ENCODE measurements at regions of chr1 and their contacts with region 1.

Region 1: GRCh38 chr1:177181631-177182291 is 11.0 kb downstream of the BRINP2 start:
- DNase-seq: no peak
- H3K4me3 ChIP-seq: peak overlapping the region; percentile 46
- H3K27ac ChIP-seq: no peak overlapping the region
- H3K27me3 ChIP-seq: peaks cover 22% of the 10 kb centered on the region
- CTCF ChIP-seq: peak; percentile 86

Region 2: DNA sequence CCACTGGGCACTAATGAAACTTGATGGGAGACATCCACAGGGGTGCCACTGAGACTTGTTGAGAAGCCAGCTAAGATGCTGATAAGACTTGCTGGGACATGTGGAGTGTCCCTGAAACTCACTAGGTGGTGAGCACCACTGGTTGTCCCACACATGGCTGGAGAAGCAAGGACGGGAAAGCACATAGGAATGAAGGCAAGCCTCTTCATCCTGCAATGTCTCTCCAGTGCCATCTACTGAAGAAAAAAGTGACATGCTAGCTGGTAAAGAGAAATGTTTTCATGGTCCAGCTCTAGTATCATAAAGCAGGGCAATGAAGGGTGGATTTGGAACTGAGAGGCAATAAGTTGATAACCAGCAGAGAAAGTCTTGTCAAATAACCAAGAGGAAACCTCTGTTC is 435.8 kb before region 1 on chr1:
- CTCF ChIA-PET with region 1: no interaction called
- POLR2A ChIA-PET with region 1: no interaction called
- DNase-seq: no peak
- H3K4me3 ChIP-seq: no peak overlapping the region
- H3K27ac ChIP-seq: no peak overlapping the region
- H3K27me3 ChIP-seq: no peaks in the 10 kb centered on the region
- CTCF ChIP-seq: no peak

Region 3: GRCh38 chr1:176897350-176898236 is 284.2 kb before region 1 on chr1:
- CTCF ChIA-PET with region 1: interaction called, 27 read pairs
- POLR2A ChIA-PET with region 1: no interaction called
- DNase-seq: peak; percentile 18
- H3K4me3 ChIP-seq: no peak overlapping the region
- H3K27ac ChIP-seq: no peak overlapping the region
- H3K27me3 ChIP-seq: no peaks in the 10 kb centered on the region
- CTCF ChIP-seq: peak; percentile 81

Region 4: GRCh38 chr1:177164380-177165068 is 17.2 kb before region 1 on chr1 and contains the start of gene ASTN1:
- CTCF ChIA-PET with region 1: interaction called, 17 read pairs
- POLR2A ChIA-PET with region 1: no interaction called
- DNase-seq: no peak
- H3K4me3 ChIP-seq: peak within 1 kb of the TSS; percentile 50
- H3K27ac ChIP-seq: no peak within 1 kb of the TSS
- H3K27me3 ChIP-seq: peaks cover 27% of the 10 kb centered on the region
- CTCF ChIP-seq: no peak
- polyA plus RNA-seq, gene ASTN1: 0.09 and 0.14 TPM in 2 replicates

Region 5: DNA sequence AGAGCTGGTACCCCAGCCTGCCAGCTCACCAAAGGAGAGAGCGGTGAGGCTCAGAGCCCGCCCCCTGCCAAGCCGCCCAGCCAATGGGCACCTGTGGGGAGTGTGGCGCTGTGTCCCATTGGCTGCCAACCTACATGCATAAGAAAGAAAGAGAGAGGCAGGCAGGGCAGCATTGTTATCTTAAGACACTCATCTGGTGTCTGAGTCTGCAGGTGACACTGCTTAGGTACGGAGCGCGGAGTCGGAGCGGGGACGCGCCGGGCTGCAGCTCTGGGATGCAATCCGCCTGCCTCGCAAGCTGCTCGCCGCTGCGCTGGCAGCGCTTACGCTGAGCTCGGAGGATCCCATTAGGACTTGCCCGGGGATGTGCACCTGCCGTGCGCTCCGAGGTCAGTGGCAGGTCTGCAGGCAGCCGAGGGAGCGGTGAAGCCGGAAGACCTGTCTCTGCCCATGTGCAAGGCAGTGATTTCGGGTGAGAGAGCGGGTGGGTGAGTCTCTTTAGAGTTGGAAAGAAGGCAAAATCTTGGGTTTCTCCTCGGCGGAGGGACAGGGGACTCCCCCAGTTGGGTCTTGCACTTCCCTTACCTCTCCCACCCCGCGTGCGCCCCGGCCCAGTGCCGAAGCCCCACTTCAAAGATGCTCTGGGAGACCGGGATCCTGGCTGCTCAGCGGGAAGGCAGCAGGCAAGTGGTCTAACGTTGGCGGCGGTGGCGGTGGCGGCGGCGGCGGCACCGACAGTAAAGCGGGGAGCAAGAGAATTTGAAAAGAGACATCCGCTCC is 10.8 kb before region 1 on chr1 and contains the start of gene BRINP2:
- CTCF ChIA-PET with region 1: interaction called, 20 read pairs
- POLR2A ChIA-PET with region 1: no interaction called
- DNase-seq: no peak
- H3K4me3 ChIP-seq: peak within 1 kb of the TSS; percentile 43
- H3K27ac ChIP-seq: no peak within 1 kb of the TSS
- H3K27me3 ChIP-seq: peaks cover 30% of the 10 kb centered on the region
- CTCF ChIP-seq: no peak
- polyA plus RNA-seq, gene BRINP2: 0.02 TPM in 1 of 2 replicates, not detected in the other

Region 6: GRCh38 chr1:177209357-177209756 is 27.6 kb after region 1 on chr1:
- CTCF ChIA-PET with region 1: interaction called, 15 read pairs
- POLR2A ChIA-PET with region 1: no interaction called
- DNase-seq: peak; percentile 99
- H3K4me3 ChIP-seq: no peak overlapping the region
- H3K27ac ChIP-seq: peak overlapping the region; percentile 55
- H3K27me3 ChIP-seq: no peaks in the 10 kb centered on the region
- CTCF ChIP-seq: no peak

Region 7: GRCh38 chr1:177948336-177948972 is 766.7 kb after region 1 on chr1:
- CTCF ChIA-PET with region 1: interaction called, 10 read pairs
- POLR2A ChIA-PET with region 1: no interaction called
- DNase-seq: no peak
- H3K4me3 ChIP-seq: no peak overlapping the region
- H3K27ac ChIP-seq: no peak overlapping the region
- H3K27me3 ChIP-seq: no peaks in the 10 kb centered on the region
- CTCF ChIP-seq: peak; percentile 98